AG04449 (cell line): ENCODE measurements at regions of chr10 and their contacts with region 1.

Region 1: DNA sequence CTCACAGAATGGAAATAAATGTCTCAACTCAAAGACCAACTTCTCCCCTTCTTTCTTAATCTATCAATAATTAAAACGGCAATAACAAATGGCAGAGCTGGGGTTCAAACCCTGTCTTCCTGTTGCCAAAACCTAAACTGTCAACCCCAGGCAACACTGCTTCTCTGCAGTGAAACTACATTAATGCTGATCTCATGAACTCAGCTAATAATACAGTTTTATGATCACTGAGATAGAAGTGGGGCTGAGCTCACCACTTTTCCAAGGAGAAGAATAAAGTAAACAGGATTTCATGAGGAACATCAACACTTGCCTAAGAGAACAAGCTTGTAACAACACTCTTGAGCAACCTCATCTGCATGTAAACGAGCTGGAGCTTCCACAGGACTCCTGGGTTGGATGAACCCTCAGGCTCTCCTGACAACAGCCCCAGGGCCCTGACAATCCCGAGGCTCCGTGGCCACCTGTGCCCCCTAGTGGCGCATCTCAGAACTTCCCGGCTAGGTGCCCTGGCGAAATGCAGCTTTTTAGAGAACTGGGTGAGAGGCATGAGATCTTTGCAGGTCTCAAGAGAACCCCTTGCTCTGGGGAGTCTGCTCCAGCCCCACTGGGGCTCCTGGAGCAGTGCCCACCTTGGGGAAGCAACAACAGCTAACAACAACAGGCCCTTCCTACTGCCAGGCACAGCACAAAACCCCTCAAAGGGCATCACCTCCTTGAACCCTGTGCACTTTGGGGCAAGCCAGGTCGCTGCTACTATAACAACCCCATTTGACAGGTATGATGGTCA is 169.3 kb downstream of the SH3PXD2A start:
- DNase-seq: no peak
- H3K4me3 ChIP-seq: no peak overlapping the region
- CTCF ChIP-seq: peak; percentile 95

Region 2: GRCh38 chr10:103540722-103541121 is 145.4 kb before region 1 on chr10:
- CTCF ChIA-PET with region 1: no interaction called
- POLR2A ChIA-PET with region 1: no interaction called
- DNase-seq: no peak
- H3K4me3 ChIP-seq: no peak overlapping the region
- CTCF ChIP-seq: no peak

Region 3: DNA sequence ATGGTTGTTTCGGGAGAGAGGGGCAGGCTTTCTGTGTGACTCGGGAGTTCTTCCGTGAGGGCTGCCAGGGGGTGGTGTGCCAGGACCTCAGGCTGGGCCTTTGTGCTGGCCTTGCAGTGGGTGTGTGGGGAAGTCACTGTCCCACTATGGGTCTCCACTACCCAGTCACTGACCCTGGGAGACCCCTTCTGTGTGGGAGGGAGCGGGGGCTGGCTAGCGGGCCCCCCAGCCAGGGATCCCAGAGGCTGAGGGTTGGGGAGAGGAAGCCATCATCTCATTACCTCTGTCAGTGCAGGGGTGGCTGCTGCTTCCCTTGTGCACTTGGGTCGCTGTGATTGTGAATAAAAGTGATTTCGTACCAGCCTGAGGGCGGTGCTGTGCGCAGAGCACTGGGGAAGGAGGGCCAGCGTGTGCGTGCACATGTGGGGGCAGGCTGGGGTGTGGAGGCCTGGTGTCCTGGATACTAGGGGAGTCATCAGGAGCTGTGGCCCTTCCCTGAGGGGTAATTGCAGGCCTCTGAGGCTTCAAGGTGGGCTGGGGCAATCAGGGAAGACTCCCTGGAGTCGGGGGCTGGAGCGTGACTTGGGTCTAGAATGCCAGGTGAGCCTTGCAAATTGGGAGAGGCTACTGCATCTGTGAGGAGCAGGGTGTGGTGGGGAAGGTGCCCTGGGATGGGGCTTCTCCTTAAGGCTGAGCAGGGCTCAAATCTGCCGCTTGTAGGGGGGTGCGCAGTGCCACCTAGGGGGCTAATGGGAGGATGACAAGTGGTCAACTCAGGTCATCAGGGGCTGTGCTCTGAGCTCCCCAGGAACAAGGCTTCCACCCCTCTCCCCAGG is 93.7 kb before region 1 on chr10:
- CTCF ChIA-PET with region 1: interaction called, 447 read pairs
- POLR2A ChIA-PET with region 1: no interaction called
- DNase-seq: no peak
- H3K4me3 ChIP-seq: no peak overlapping the region
- CTCF ChIP-seq: peak; percentile 80

Region 4: GRCh38 chr10:103637927-103638557 is 48.0 kb before region 1 on chr10:
- CTCF ChIA-PET with region 1: interaction called, 29 read pairs
- POLR2A ChIA-PET with region 1: no interaction called
- DNase-seq: no peak
- H3K4me3 ChIP-seq: no peak overlapping the region
- CTCF ChIP-seq: no peak

Region 5: GRCh38 chr10:103659674-103660363 is 26.3 kb before region 1 on chr10:
- CTCF ChIA-PET with region 1: interaction called, 84 read pairs
- POLR2A ChIA-PET with region 1: interaction called, 4 read pairs
- DNase-seq: peak; percentile 53
- H3K4me3 ChIP-seq: peak overlapping the region; percentile 83
- CTCF ChIP-seq: peak; percentile 25

Region 6: GRCh38 chr10:103696411-103697145 is 10.5 kb after region 1 on chr10:
- CTCF ChIA-PET with region 1: interaction called, 81 read pairs
- POLR2A ChIA-PET with region 1: interaction called, 4 read pairs
- DNase-seq: peak; percentile 75
- H3K4me3 ChIP-seq: no peak overlapping the region
- CTCF ChIP-seq: peak; percentile 68